Heart right ventricle (tissue), 16 donors: ENCODE measurements at regions of chr3 and their contacts with region 1.

Region 1: GRCh38 chr3:85838921-85839320 is 880.1 kb downstream of the CADM2 start:
- DNase-seq: no peak
- ATAC-seq: no peak
- H3K4me3 ChIP-seq: no peak overlapping the region
- H3K27ac ChIP-seq: no peak overlapping the region
- H3K4me1 ChIP-seq: no peaks in the 10 kb centered on the region
- H3K27me3 ChIP-seq: no peaks in the 10 kb centered on the region
- CTCF ChIP-seq: no peak

Region 2: GRCh38 chr3:85801955-85802354 is 37.0 kb before region 1 on chr3:
- intact Hi-C with region 1: no loop called
- DNase-seq: no peak
- ATAC-seq: no peak
- H3K4me3 ChIP-seq: no peak overlapping the region
- H3K27ac ChIP-seq: no peak overlapping the region
- H3K4me1 ChIP-seq: no peaks in the 10 kb centered on the region
- H3K27me3 ChIP-seq: peaks cover 0 to 5% (median 0%) of the 10 kb centered on the region in 7 donors
- CTCF ChIP-seq: peak in 7 of 9 donors; percentile 23 to 52 (median 43)

Region 3: GRCh38 chr3:85890043-85890555 is 51.2 kb after region 1 on chr3:
- intact Hi-C with region 1: loop called in 1 of 10 experiments (anchors 10 kb)
- DNase-seq: no peak
- ATAC-seq: no peak
- H3K4me3 ChIP-seq: no peak overlapping the region
- H3K27ac ChIP-seq: no peak overlapping the region
- H3K4me1 ChIP-seq: no peaks in the 10 kb centered on the region
- H3K27me3 ChIP-seq: peaks cover 0 to 5% (median 0%) of the 10 kb centered on the region in 7 donors
- CTCF ChIP-seq: no peak